ENCODE measurements at regions of chr10 and their contacts with region 1.

Region 1: DNA sequence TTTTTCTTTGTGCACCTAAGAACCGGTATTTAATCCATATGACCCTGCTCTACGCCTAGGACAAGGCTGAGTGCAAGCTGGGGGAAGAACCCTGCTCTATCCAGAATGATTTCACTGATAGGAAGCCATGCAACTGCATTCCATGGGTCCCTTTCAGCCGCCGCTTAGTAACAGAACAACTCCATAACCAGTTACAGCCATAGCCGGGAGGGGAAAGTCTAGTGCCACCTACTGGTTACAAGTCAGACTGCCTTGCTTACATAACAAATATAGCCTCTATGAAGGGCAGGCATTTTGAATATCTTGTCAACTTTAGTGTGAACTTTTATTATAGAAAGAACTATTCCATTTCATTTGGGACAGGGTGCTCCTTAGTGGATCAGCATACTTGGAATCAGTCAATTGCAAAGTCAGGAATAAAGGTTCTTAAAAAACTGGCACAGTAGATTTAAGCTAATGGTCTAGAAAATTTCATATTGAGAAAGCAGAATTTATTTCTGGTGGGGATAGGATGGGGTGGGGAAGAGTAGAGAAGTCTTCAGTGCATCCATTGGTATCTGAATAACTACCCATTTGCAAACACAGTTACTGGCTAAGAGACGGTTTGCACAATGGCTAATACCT is 521.7 kb downstream of the ADRA2A start:
- DNase-seq: peak; percentile 42
- H3K4me3 ChIP-seq: no peak overlapping the region
- H3K27ac ChIP-seq: no peak overlapping the region
- H3K4me1 ChIP-seq: no peaks in the 10 kb centered on the region
- H3K27me3 ChIP-seq: no peaks in the 10 kb centered on the region
- CTCF ChIP-seq: peak; percentile 59 to 83 (median 69)
- EP300 ChIP-seq: no peak
- POLR2A ChIP-seq: no peak

Region 2: GRCh38 chr10:111072232-111072631 is 526.3 kb before region 1 on chr10:
- in situ Hi-C with region 1: loop called in 1 of 4 experiments (anchors 25 kb)
- intact Hi-C with region 1: no loop called
- DNase-seq: no peak
- H3K4me3 ChIP-seq: no peak overlapping the region
- H3K27ac ChIP-seq: no peak overlapping the region
- H3K4me1 ChIP-seq: peaks cover 0 to 16% (median 13%) of the 10 kb centered on the region in 4 donors
- H3K27me3 ChIP-seq: peaks cover 38% of the 10 kb centered on the region
- CTCF ChIP-seq: no peak
- EP300 ChIP-seq: no peak
- POLR2A ChIP-seq: no peak

Measured in transverse colon (tissue), 4 donors.